ENCODE measurements at regions of chr9 and their contacts with region 1.

Region 1: DNA sequence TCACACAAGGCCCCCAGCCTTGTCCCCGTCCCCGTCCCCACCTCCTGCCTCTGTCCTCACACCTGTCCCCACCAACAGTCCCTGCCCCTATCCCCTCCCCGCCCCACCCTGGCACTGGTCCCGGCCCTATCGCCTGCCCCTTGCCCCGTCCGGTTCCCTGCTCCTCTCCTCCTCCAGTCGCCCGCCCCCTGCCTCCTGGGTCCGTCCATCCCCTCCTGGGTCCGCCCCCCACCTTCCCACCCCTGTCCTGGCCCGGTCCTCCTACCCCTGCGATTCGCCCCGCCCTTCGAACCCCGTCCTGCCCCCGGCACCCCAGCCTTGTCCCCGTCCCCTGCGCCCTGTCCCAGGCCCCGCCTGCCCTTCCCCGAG is 389 bp downstream of the EDF1 start:
- DNase-seq: no peak
- H3K4me3 ChIP-seq: peak overlapping the region; percentile 81 to 97
- H3K27ac ChIP-seq: peak overlapping the region; percentile 86 to 91
- H3K4me1 ChIP-seq: peaks cover 5 to 15% of the 10 kb centered on the region in 2 donors
- H3K27me3 ChIP-seq: no peaks in the 10 kb centered on the region
- CTCF ChIP-seq: no peak

Region 2: DNA sequence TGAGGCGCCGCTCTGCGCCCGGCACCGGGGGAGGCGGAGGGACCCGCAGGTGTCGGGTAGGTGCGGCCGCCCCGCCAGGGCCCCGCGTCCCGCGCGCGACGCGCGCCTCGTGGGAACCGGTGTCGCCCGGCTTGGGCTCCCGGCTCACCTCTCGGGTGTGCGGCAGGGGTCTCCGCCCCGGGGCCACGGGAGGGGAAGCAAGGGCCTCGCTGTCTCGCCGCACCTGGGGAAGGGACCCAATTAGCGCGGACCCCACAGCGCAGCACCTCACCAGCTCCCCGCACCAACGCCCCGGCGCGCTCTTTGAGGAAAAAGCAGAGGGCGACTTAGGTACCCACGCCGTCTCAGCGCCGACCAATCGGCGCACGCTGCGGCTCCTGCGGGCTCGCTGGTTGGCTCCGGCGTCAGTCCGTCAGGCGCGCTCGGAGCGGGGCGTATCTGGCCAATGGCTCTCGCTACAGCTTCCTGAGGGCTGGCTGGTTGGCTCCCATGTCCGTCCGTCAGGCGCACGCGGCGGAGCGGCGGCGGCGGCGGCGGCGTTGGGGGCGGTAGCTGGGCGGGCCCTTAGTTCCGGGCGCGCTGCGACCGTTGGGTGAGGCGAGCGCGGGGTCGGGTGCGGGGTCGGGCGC is 20.3 kb after region 1 on chr9 and contains the start of gene TRAF2:
- intact Hi-C with region 1: loop called (anchors 1 kb)
- DNase-seq: peak; percentile 88 to 98
- H3K4me3 ChIP-seq: peak within 1 kb of the TSS; percentile 89 to 96
- H3K27ac ChIP-seq: peak within 1 kb of the TSS; percentile 76 to 78
- H3K4me1 ChIP-seq: peaks cover 0 to 8% of the 10 kb centered on the region in 2 donors
- H3K27me3 ChIP-seq: no peaks in the 10 kb centered on the region
- CTCF ChIP-seq: peak in 1 of 3 experiments; percentile 30
- total RNA-seq, gene TRAF2: 4.4 TPM